ENCODE measurements at regions of chr1 and their contacts with region 1.

Region 1: GRCh38 chr1:168082008-168082876 is 54.5 kb downstream of the GPR161 start:
- DNase-seq: peak; percentile 45 to 75 (median 68)
- H3K4me3 ChIP-seq: no peak overlapping the region
- H3K27ac ChIP-seq: no peak overlapping the region
- H3K4me1 ChIP-seq: peaks cover 0 to 10% (median 4%) of the 10 kb centered on the region in 4 experiments
- H3K27me3 ChIP-seq: no peaks in the 10 kb centered on the region

Region 2: GRCh38 chr1:168092566-168093355 is 10.5 kb after region 1 on chr1:
- CTCF ChIA-PET with region 1: interaction called, 15 read pairs
- POLR2A ChIA-PET with region 1: no interaction called
- DNase-seq: no peak
- H3K4me3 ChIP-seq: no peak overlapping the region
- H3K27ac ChIP-seq: no peak overlapping the region
- H3K4me1 ChIP-seq: peaks cover 0 to 3% (median 0%) of the 10 kb centered on the region in 4 experiments
- H3K27me3 ChIP-seq: no peaks in the 10 kb centered on the region